ENCODE measurements at regions of chr16 and their contacts with region 1.

Region 1: GRCh38 chr16:75566040-75566810 is at the start of gene GABARAPL2:
- DNase-seq: peak; percentile 73 to 92
- ATAC-seq: peak; percentile 83
- total RNA-seq, gene GABARAPL2: 91.1 to 110 TPM

Region 2: DNA sequence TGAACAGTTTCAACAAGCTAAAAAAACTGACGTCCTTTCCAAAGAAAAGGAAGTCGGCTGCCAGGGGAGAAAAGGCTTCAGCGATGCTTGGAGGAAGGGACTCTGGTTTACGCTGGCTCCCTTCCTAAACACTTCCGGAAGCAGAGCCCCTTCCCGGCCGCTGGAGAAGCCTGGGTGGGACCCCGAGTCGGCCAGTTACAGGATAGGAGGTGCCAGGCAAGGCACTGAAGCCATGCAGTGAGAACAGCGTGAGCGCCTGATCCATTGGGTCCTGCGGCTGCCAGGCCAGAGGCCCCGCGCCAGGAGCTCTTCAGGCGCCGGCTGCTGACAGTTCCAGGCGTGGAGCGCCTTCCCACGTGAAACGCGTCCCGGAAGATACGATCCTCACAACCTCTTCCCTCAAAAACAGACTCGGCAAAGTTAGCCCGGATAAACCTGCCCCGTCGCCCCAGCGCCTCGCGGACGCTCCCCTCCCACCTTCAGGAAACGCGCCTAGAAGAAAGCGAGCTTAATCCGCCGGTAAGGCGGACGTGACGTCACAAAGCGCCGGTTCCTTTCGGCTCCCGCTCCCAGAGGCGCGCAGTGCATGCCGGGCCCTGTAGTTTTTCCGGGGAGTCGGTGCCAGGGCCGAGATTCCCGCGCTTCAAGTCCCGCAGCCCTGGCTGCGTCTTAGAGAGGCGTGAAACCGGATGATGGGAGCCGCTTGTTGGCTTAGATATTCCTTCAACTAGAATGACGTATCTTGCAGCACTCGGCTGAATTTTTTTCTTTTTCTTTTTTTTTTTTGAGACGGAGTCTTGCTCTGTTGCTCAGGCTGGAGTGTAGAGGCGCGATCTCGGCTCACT is 56.8 kb after region 1 on chr16 and contains the start of gene ADAT1:
- intact Hi-C with region 1: loop called in 1 of 2 experiments (anchors 5 kb)
- DNase-seq: peak; percentile 98 to 100
- ATAC-seq: peak; percentile 92
- total RNA-seq, gene ADAT1: 35.9 to 37.5 TPM

Region 3: GRCh38 chr16:75660726-75661302 is 94.6 kb after region 1 on chr16:
- intact Hi-C with region 1: no loop called
- DNase-seq: no peak
- ATAC-seq: no peak

Region 4: DNA sequence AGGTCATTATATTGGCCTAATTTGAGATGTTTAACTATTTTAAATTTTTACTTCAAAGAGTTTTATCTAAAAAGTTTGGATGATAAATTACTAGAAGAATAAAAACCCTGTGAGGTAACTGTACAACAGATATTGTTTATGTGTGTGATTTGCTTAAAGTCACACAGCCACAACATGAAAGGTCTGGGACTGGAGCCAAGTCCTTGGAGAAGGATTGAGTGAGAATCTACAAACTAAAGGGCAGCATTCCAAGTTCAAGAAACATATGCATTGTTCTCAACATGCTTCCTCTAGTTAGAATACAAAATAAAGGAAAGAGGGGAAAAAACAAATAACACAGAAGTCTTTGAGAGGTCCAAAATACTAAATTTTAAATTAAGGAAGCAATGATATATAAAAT is 1493.2 kb after region 1 on chr16:
- intact Hi-C with region 1: no loop called
- DNase-seq: no peak
- ATAC-seq: no peak

Measured in left colon (tissue), 2 donors.